Ascending aorta (tissue), 2 donors: ENCODE measurements at regions of chrX and their contacts with region 1.

Region 1: DNA sequence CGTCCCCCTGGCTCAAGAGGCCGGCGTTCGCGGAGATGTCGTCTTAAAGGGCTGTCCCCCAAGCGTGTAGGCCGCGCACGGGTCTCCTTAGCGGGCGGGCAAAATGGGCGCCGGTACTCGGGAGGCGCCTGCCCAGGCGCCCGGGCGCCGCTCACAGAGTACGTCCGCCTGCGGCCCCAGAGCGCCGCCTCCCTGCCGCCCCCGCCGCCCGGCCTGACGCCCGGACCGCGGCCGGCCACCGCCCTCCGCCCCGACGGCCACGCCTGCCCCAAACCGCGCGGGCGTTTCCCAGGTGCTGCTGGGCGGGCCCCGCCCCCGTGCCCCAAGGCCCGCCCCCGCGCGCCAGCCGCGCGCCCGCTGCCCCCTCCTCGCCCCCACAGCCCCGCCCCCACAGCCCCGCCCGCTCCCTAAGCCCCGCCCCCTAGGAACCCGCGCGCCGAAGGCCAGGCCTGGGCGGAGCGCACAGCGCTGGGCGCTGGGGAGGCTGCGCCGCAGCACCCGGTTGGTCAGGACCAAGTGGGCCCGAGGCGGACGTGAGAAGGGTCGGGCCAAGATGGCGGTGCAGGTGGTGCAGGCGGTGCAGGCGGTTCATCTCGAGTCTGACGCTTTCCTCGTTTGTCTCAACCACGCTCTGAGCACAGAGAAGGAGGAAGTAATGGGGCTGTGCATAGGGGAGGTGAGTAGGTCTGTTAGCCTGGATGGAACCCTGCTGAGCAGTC is at the starts of genes BRCC3, CMC4 and MTCP1:
- DNase-seq: peak; percentile 28 to 84
- H3K4me3 ChIP-seq: peak within 1 kb of the TSS; percentile 60 to 64
- H3K27ac ChIP-seq: peak within 1 kb of the TSS; percentile 88 to 93
- H3K4me1 ChIP-seq: no peaks in the 10 kb centered on the region
- H3K27me3 ChIP-seq: no peaks in the 10 kb centered on the region
- CTCF ChIP-seq: no peak
- total RNA-seq, gene BRCC3: 9.4 TPM
- total RNA-seq, gene CMC4: 11.9 TPM
- total RNA-seq, gene MTCP1: 6.1 TPM

Region 2: DNA sequence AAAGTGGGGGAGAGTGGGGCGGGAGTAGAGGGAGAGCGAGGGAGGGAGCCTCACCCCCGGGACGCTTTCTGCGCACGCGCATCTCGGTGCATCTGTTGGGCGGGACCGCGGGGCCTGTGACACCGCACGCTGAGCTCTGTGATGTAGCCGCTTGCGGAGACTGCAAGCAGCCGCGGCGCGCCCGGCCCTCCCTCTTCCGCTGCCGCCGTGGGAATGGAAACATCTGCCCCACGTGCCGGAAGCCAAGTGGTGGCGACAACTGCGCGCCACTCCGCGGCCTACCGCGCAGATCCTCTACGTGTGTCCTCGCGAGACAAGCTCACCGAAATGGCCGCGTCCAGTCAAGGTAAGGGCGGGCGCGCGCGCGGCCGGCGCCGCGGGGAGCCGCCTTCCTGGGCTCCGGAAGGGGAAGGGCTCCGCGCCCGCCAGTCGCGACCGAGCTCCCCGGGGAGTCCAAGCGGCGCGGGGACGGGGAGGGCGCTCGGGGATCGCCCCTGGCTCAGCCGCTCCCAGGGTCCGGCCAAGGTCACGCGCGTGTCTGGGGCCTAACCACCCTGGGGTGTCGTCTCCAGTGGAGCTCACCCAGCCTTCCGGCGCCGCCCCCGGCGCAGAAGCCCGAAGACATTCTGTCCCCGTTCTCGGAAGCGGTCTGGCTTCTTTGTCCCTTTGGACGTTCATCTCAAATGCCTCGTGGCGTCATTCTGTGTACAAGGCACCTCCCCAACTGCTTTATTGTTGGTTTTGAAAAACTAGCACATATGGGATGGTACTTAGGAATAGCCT is 44.2 kb before region 1 on chrX and contains the start of gene FUNDC2:
- intact Hi-C with region 1: loop called (anchors 1 kb)
- DNase-seq: peak; percentile 76 to 96
- H3K4me3 ChIP-seq: peak within 1 kb of the TSS; percentile 61 to 73
- H3K27ac ChIP-seq: peak within 1 kb of the TSS; percentile 96 to 97
- H3K4me1 ChIP-seq: no peaks in the 10 kb centered on the region
- H3K27me3 ChIP-seq: no peaks in the 10 kb centered on the region
- CTCF ChIP-seq: no peak
- total RNA-seq, gene FUNDC2: 54.0 TPM

Region 3: GRCh38 chrX:155745792-155746191 is 674.7 kb after region 1 on chrX:
- intact Hi-C with region 1: loop called (anchors 10 kb)
- DNase-seq: peak in 1 of 2 donors; percentile 62
- H3K4me3 ChIP-seq: no peak overlapping the region
- H3K27ac ChIP-seq: no peak overlapping the region
- H3K4me1 ChIP-seq: no peaks in the 10 kb centered on the region
- H3K27me3 ChIP-seq: no peaks in the 10 kb centered on the region
- CTCF ChIP-seq: no peak